OCI-LY7 (cell line): ENCODE measurements at regions of chr2 and their contacts with region 1.

Region 1: DNA sequence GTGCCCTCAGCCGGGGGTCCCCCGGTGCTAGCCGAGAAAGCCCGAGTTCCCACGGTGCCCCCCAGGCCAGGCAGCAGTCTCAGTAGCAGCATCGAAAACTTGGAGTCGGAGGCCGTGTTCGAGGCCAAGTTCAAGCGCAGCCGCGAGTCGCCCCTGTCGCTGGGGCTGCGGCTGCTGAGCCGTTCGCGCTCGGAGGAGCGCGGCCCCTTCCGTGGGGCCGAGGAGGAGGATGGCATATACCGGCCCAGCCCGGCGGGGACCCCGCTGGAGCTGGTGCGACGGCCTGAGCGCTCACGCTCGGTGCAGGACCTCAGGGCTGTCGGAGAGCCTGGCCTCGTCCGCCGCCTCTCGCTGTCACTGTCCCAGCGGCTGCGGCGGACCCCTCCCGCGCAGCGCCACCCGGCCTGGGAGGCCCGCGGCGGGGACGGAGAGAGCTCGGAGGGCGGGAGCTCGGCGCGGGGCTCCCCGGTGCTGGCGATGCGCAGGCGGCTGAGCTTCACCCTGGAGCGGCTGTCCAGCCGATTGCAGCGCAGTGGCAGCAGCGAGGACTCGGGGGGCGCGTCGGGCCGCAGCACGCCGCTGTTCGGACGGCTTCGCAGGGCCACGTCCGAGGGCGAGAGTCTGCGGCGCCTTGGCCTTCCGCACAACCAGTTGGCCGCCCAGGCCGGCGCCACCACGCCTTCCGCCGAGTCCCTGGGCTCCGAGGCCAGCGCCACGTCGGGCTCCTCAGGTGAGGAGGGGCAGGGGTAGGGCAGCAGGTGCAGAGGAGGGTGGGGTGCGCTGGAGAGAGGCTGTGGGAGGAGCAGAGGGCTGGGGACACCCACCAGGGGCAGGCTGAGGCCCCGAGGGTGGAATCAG is 14.1 kb upstream of the GMPPA start:
- DNase-seq: no peak
- H3K4me3 ChIP-seq: no peak overlapping the region
- H3K27ac ChIP-seq: no peak overlapping the region
- H3K4me1 ChIP-seq: no peaks in the 10 kb centered on the region
- CTCF ChIP-seq: no peak

Region 2: DNA sequence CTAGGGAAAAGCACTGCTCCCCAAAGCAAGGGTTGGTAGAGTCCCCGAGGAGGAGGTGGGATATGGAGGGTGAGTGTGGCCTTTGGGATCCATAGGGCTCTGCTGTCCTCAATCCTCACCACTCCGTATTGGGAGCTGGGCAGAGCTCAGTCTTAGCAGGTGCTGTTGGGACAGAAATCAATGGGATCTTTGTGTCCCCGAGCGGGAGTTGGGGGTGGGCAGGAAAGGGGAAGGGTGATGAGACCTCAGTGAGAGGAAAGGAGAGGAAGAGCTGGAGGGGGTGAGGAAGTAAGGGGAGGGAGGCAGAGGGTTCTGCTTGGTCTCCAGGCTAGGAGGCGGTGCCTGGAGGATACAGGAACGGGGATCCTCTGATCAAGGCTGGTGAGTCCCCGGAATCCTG is 32.3 kb after region 1 on chr2:
- CTCF ChIA-PET with region 1: interaction called, 17 read pairs
- POLR2A ChIA-PET with region 1: no interaction called
- intact Hi-C with region 1: no loop called
- DNase-seq: no peak
- H3K4me3 ChIP-seq: no peak overlapping the region
- H3K27ac ChIP-seq: no peak overlapping the region
- H3K4me1 ChIP-seq: no peaks in the 10 kb centered on the region
- CTCF ChIP-seq: no peak

Region 3: GRCh38 chr2:219664944-219665343 is 180.4 kb after region 1 on chr2:
- CTCF ChIA-PET with region 1: no interaction called
- POLR2A ChIA-PET with region 1: no interaction called
- intact Hi-C with region 1: no loop called
- DNase-seq: no peak
- H3K4me3 ChIP-seq: no peak overlapping the region
- H3K27ac ChIP-seq: no peak overlapping the region
- H3K4me1 ChIP-seq: no peaks in the 10 kb centered on the region
- CTCF ChIP-seq: no peak

Region 4: GRCh38 chr2:219836647-219837177 is 352.1 kb after region 1 on chr2:
- CTCF ChIA-PET with region 1: no interaction called
- POLR2A ChIA-PET with region 1: no interaction called
- intact Hi-C with region 1: no loop called
- DNase-seq: peak; percentile 14
- H3K4me3 ChIP-seq: no peak overlapping the region
- H3K27ac ChIP-seq: no peak overlapping the region
- H3K4me1 ChIP-seq: no peaks in the 10 kb centered on the region
- CTCF ChIP-seq: peak; percentile 69